ENCODE measurements at regions of chr17 and their contacts with region 1.

Region 1: DNA sequence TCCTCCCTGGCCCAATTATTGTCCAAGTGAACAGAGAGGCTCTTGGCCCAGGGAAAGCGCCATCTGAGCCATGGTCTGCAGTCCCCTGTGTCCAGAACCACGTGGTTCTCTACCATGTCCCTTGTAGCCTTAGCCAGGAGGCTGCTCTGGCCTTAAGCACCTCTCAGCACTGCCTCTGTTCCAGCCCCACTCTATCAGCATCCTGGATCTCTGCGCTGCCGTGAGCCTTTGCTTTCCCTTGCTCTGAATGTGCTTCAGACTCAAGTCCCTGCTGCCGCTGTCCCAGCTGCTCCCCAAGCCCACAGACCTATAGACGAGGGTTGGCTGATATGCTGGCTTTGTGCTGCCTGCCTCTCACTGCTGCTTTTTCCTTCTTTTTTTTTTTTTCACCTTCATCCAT is 33.9 kb downstream of the CYB561 start:
- DNase-seq: no peak
- H3K4me3 ChIP-seq: no peak overlapping the region
- H3K27me3 ChIP-seq: no peaks in the 10 kb centered on the region
- CTCF ChIP-seq: no peak

Region 2: GRCh38 chr17:63171428-63172393 is 240.5 kb before region 1 on chr17:
- CTCF ChIA-PET with region 1: no interaction called
- POLR2A ChIA-PET with region 1: interaction called, 13 read pairs
- DNase-seq: no peak
- H3K4me3 ChIP-seq: no peak overlapping the region
- H3K27me3 ChIP-seq: no peaks in the 10 kb centered on the region
- CTCF ChIP-seq: no peak

Region 3: DNA sequence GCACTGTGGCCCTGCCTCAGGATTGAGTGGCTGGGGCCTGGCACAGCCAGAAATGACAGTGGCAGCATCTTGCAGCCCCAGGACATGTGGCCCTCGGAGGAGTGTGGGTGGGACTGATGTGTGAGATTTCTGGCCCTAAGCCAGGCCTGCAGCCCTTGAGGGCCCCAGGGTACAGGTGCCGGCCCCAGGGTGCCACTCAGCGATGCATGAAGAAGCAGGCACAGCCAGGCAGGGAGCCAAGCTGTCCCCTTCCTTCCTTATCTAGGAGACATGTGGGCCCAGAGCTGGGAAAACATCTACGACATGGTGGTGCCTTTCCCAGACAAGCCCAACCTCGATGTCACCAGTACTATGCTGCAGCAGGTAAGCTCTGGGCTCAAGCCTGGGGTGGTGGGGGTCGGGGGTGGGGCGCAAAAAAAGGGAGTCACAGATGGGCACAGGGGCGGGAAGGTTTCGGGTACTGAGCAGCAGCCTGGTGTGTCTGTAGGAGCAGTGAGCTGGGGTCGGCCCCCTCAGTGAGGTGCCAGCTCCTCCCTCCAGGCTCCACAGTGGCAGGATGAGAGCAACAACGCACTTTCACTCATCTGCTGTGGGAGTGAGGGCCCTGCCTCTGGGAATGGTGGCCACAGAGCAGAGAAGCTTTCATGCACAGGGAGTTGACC is 68.7 kb after region 1 on chr17:
- CTCF ChIA-PET with region 1: no interaction called
- POLR2A ChIA-PET with region 1: no interaction called
- DNase-seq: no peak
- H3K4me3 ChIP-seq: no peak overlapping the region
- H3K27me3 ChIP-seq: no peaks in the 10 kb centered on the region; the same call in 1 of the 2 replicates
- CTCF ChIP-seq: no peak